Heart left ventricle (tissue), 16 donors: ENCODE measurements at regions of chr13 and their contacts with region 1.

Region 1: DNA sequence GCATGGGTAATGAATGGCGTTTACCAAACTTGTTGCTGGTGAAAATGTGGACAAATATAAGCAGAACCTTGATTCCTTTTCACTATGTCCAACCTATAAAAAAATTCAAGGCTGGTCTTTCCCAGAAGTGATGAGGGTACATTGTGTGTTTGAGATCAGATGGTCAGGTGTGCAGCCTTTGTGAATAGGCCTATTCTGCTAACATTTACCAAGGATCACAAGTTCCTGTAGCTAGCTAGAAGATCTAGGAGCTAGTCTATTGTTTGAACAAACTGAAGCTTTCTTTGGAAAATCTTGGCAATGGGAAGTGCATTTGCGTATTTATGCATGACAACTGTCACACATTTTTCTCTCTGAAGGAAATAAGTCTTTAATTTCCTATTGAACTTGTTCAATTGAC is 489.6 kb downstream of the KLF5 start:
- DNase-seq: no peak
- ATAC-seq: no peak
- H3K4me3 ChIP-seq: no peak overlapping the region
- H3K27ac ChIP-seq: no peak overlapping the region
- H3K4me1 ChIP-seq: no peaks in the 10 kb centered on the region
- H3K27me3 ChIP-seq: no peaks in the 10 kb centered on the region
- CTCF ChIP-seq: no peak
- POLR2A ChIP-seq: no peak

Region 2: GRCh38 chr13:73417015-73417623 is 131.3 kb before region 1 on chr13:
- intact Hi-C with region 1: no loop called
- DNase-seq: no peak
- ATAC-seq: no peak
- H3K4me3 ChIP-seq: no peak overlapping the region
- H3K27ac ChIP-seq: no peak overlapping the region
- H3K4me1 ChIP-seq: no peaks in the 10 kb centered on the region
- H3K27me3 ChIP-seq: no peaks in the 10 kb centered on the region
- CTCF ChIP-seq: peak in 2 of 12 donors; percentile 16 to 22
- POLR2A ChIP-seq: no peak

Region 3: GRCh38 chr13:73505376-73505890 is 43.0 kb before region 1 on chr13:
- intact Hi-C with region 1: loop called in 1 of 10 experiments (anchors 2 kb)
- DNase-seq: no peak
- ATAC-seq: no peak
- H3K4me3 ChIP-seq: no peak overlapping the region
- H3K27ac ChIP-seq: no peak overlapping the region
- H3K4me1 ChIP-seq: no peaks in the 10 kb centered on the region
- H3K27me3 ChIP-seq: no peaks in the 10 kb centered on the region
- CTCF ChIP-seq: no peak
- POLR2A ChIP-seq: no peak

Region 4: GRCh38 chr13:73578251-73578875 is 29.9 kb after region 1 on chr13:
- intact Hi-C with region 1: no loop called
- DNase-seq: no peak
- ATAC-seq: no peak
- H3K4me3 ChIP-seq: no peak overlapping the region
- H3K27ac ChIP-seq: no peak overlapping the region
- H3K4me1 ChIP-seq: no peaks in the 10 kb centered on the region
- H3K27me3 ChIP-seq: no peaks in the 10 kb centered on the region
- CTCF ChIP-seq: no peak
- POLR2A ChIP-seq: no peak